AG04449 (cell line): ENCODE measurements at regions of chr2 and their contacts with region 1.

Region 1: DNA sequence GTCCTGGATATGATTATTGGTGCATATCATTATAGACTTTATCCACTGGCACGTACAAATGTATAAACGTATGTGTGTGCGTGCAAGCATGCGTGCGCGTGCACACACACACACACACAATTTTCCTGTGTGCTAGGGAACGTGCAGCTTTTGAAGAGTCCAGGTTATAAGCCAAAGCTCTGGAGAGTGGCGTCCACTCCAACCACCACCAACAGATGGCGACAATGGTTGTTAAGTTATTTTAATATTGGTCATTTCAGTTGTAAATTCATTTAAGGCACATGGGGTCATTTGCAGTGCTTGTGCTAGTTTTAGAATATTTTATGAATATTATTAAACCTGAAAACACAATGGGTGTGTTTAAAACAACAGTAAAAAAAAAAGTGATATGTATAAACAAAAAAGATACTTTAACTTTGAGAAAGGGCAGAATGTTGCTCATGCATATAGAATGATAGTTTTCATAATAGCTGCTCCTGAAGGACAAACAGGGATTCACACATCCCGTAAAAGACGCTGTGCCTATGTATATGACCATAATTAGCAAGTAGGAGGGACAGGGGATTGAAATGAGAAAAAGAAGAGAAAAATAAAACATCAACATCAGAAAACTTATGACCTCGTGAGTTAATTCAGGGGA is 124.2 kb upstream of the ITGB6 start:
- DNase-seq: no peak
- H3K4me3 ChIP-seq: no peak overlapping the region
- CTCF ChIP-seq: peak; percentile 62

Region 2: GRCh38 chr2:160353166-160353565 is 28.9 kb after region 1 on chr2:
- CTCF ChIA-PET with region 1: interaction called, 11 read pairs
- POLR2A ChIA-PET with region 1: no interaction called
- DNase-seq: no peak
- H3K4me3 ChIP-seq: no peak overlapping the region
- CTCF ChIP-seq: no peak

Region 3: GRCh38 chr2:160417745-160418397 is 93.6 kb after region 1 on chr2:
- CTCF ChIA-PET with region 1: no interaction called
- POLR2A ChIA-PET with region 1: no interaction called
- DNase-seq: peak; percentile 82
- H3K4me3 ChIP-seq: no peak overlapping the region
- CTCF ChIP-seq: no peak